ENCODE measurements at regions of chr12 and their contacts with region 1.

Region 1: DNA sequence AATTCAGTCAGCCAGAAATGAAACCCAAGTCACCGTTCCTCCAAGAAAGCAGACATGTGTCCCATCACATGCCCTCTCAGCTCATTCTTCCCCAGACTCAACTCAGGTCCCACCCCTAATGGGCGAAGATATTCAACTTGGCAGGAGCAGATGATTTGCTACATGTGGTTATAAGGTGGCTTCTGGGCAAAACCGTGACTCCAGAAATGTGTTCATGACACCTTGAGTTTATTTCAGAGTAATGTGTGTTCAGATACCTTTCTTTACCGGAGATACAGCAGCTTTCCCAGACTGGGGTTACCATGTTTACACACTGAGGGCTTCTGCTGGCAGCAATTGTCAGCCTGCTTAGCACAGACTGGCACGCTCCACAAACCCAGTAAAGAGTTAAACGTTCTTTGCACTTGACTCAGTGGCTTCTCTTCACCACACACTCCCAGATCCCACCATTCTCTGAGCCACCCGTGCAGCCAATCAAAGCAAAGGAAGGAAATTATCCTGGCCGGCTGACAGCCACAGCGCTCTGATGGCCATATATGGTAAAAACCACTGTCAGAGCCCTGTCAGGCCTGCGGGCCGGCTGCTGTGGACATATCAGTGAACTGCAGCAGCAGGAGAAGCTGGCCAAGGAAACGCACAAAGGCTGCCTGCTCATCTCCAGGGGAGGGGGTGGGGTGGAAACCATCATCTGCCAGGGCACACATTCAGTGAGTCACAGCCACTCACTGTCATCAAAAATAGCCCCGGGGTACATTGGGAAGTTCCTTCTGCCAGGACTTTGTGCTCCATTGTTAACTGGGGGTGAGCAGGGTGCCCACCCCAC is 39.9 kb downstream of the CORO1C start:
- DNase-seq: peak; percentile 91
- ATAC-seq: peak; percentile 83
- H3K4me3 Mint-ChIP-seq: peak overlapping the region; percentile 68
- H3K27ac Mint-ChIP-seq: peak overlapping the region; percentile 90
- H3K4me1 Mint-ChIP-seq: peaks cover 68% of the 10 kb centered on the region
- H3K27me3 Mint-ChIP-seq: no peaks in the 10 kb centered on the region

Region 2: GRCh38 chr12:108701779-108702441 is 10.5 kb after region 1 on chr12:
- CTCF ChIA-PET with region 1: interaction called, 11 read pairs
- DNase-seq: peak; percentile 60
- ATAC-seq: peak; percentile 91
- H3K4me3 Mint-ChIP-seq: no peak overlapping the region
- H3K27ac Mint-ChIP-seq: peak overlapping the region; percentile 13
- H3K4me1 Mint-ChIP-seq: peaks cover 20% of the 10 kb centered on the region
- H3K27me3 Mint-ChIP-seq: no peaks in the 10 kb centered on the region

Measured in activated CD8-positive, alpha-beta memory T cell treated with anti-CD3 and anti-CD28 coated beads, Interleukin-2, amount 10 ng/mL, durations not matched to agents 7 days and 5 days (primary cell).